ENCODE measurements at regions of chr1 and their contacts with region 1.

Region 1: DNA sequence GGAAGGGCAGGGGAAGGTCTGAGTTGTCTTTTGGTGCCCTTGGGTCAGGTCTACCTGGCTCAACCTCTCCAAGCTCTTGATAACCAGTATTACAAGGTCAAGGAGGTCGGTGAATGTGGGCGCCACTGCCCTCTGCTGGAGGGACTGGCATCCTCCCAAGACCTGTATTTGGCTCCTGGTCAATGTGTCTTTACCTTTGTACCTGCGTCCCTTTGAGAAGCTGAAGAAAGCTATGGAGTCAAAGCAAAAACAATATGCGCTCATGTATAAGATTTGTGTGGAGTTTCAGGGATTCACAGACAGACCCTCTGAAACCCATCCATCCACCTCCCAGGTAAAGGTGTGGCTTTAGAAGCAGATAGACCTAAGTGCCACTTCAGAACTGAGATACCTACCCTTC is 61.8 kb upstream of the NBL1 start:
- DNase-seq: peak; percentile 70 to 86
- ATAC-seq: peak; percentile 77 to 97 (median 95)
- H3K4me3 ChIP-seq: no peak overlapping the region
- H3K4me3 Mint-ChIP-seq: no peak overlapping the region
- H3K27ac ChIP-seq: no peak overlapping the region
- H3K27ac Mint-ChIP-seq: no peak overlapping the region
- H3K4me1 ChIP-seq: no peaks in the 10 kb centered on the region
- H3K4me1 Mint-ChIP-seq: no peaks in the 10 kb centered on the region
- H3K27me3 ChIP-seq: no peaks in the 10 kb centered on the region
- H3K27me3 Mint-ChIP-seq: no peaks in the 10 kb centered on the region
- CTCF ChIP-seq: peak; percentile 84

Region 2: GRCh38 chr1:19341201-19342072 is 240.9 kb before region 1 on chr1:
- intact Hi-C with region 1: loop called (anchors 1 kb)
- DNase-seq: peak; percentile 71 to 85
- ATAC-seq: peak; percentile 80 to 97 (median 80)
- H3K4me3 ChIP-seq: no peak overlapping the region
- H3K4me3 Mint-ChIP-seq: no peak overlapping the region
- H3K27ac ChIP-seq: no peak overlapping the region
- H3K27ac Mint-ChIP-seq: peak overlapping the region; percentile 19 to 22
- H3K4me1 ChIP-seq: no peaks in the 10 kb centered on the region
- H3K4me1 Mint-ChIP-seq: peaks cover 0 to 5% of the 10 kb centered on the region in 2 donors
- H3K27me3 ChIP-seq: no peaks in the 10 kb centered on the region
- H3K27me3 Mint-ChIP-seq: no peaks in the 10 kb centered on the region
- CTCF ChIP-seq: peak; percentile 91

Region 3: GRCh38 chr1:19651141-19651737 is 68.9 kb after region 1 on chr1:
- intact Hi-C with region 1: loop called (anchors 5 kb)
- DNase-seq: peak in 1 of 2 donors; percentile 75
- ATAC-seq: peak; percentile 45 to 63 (median 63)
- H3K4me3 ChIP-seq: no peak overlapping the region
- H3K4me3 Mint-ChIP-seq: no peak overlapping the region
- H3K27ac ChIP-seq: no peak overlapping the region
- H3K27ac Mint-ChIP-seq: no peak overlapping the region
- H3K4me1 ChIP-seq: peaks cover 8% of the 10 kb centered on the region
- H3K4me1 Mint-ChIP-seq: peaks cover 6 to 7% of the 10 kb centered on the region in 2 donors
- H3K27me3 ChIP-seq: no peaks in the 10 kb centered on the region
- H3K27me3 Mint-ChIP-seq: peaks cover 0 to 5% of the 10 kb centered on the region in 2 donors
- CTCF ChIP-seq: peak; percentile 20